PC-3 (cell line): ENCODE measurements at regions of chr13 and their contacts with region 1.

Region 1: DNA sequence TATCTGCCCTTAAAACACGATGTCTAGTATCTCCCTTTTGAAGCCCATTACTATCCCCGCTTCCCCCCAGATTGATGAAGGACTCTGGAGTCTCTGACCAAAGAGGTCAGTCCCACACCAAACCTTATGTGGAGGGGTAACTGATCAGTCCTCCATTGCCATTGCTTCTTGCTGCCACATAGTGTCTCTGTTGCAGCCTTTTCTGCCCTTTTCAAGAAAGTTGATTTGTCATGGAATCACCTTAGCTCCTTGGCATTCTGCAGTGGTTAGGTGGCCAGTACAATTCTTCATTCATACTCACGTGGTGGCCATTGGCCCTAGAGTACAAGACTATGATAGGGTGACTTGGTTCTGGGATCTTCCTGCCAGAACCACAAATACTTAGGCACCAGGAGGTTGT is 8.4 kb upstream of the HTR2A start:
- DNase-seq: peak; percentile 55
- ATAC-seq: peak; percentile 71
- H3K4me3 ChIP-seq: no peak overlapping the region
- H3K27ac ChIP-seq: no peak overlapping the region
- H3K4me1 ChIP-seq: peaks cover 13% of the 10 kb centered on the region
- H3K27me3 ChIP-seq: no peaks in the 10 kb centered on the region
- CTCF ChIP-seq: peak; percentile 59

Region 2: GRCh38 chr13:46759846-46760245 is 145.4 kb before region 1 on chr13:
- CTCF ChIA-PET with region 1: no interaction called
- POLR2A ChIA-PET with region 1: no interaction called
- intact Hi-C with region 1: loop called (anchors 1 kb)
- DNase-seq: peak; percentile 33
- ATAC-seq: peak; percentile 52
- H3K4me3 ChIP-seq: no peak overlapping the region
- H3K27ac ChIP-seq: peak overlapping the region; percentile 16; the same call in 1 of the 2 replicates
- H3K4me1 ChIP-seq: peaks cover 36% of the 10 kb centered on the region
- H3K27me3 ChIP-seq: no peaks in the 10 kb centered on the region
- CTCF ChIP-seq: no peak

Region 3: DNA sequence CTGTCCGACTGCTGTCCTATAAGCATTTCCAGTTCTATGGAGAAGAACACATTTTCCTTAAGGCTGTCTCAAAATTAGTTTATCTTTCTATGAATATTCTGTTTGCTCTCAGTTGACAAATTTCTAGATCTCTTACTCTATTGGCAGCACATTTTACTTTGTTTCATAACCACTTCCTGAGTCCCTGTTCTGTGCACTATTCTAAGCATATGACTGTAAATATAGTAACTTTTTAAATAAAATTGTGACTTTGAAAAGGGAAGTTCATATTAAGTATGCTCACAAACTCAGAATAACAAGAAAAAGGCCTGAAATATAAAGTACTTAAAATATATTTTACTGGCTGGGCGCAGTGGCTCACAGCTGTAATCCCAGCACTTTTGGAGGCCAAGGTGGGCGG is 48.1 kb after region 1 on chr13:
- CTCF ChIA-PET with region 1: no interaction called
- POLR2A ChIA-PET with region 1: no interaction called
- intact Hi-C with region 1: loop called (anchors 5 kb)
- DNase-seq: peak; percentile 25
- ATAC-seq: no peak
- H3K4me3 ChIP-seq: no peak overlapping the region
- H3K27ac ChIP-seq: peak overlapping the region; percentile 1; the same call in 1 of the 2 replicates
- H3K4me1 ChIP-seq: peaks cover 39% of the 10 kb centered on the region
- H3K27me3 ChIP-seq: no peaks in the 10 kb centered on the region
- CTCF ChIP-seq: no peak

Region 4: DNA sequence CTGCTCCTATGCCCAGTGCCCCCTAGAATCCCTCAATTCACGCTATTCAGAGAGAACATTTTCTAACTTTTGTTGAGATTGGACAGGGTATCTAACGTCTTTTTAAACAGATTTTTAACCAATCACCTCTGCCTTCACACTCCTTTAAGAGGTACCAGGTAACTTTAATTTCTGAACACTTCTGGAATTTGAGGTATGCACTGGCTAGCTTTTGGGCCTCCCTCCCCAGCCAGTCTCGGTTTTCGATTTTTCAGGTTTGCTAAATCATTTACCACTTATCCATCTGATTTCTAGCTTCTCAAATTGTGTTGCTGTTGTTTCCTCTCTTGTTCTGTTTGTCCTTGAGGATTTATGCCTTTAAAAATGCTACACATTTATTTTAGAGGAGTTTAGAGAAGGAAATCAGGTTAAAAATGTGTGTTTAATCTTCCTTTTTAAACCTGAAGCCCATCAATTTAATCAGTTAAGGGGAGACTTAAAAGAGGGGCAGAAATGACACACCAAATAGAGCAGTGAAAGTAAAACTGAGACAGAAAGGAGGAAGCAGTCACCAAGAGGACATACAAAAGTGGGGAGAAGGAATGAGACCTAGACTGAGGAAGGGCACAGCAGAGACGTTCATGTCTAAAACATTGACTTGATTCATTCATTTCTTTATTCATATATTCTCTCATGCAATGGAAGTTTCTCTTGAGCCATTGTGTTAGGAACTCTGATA is 131.2 kb after region 1 on chr13:
- CTCF ChIA-PET with region 1: no interaction called
- POLR2A ChIA-PET with region 1: no interaction called
- intact Hi-C with region 1: no loop called
- DNase-seq: no peak
- ATAC-seq: no peak
- H3K4me3 ChIP-seq: no peak overlapping the region
- H3K27ac ChIP-seq: no peak overlapping the region
- H3K4me1 ChIP-seq: peaks cover 34% of the 10 kb centered on the region
- H3K27me3 ChIP-seq: no peaks in the 10 kb centered on the region
- CTCF ChIP-seq: no peak

Region 5: DNA sequence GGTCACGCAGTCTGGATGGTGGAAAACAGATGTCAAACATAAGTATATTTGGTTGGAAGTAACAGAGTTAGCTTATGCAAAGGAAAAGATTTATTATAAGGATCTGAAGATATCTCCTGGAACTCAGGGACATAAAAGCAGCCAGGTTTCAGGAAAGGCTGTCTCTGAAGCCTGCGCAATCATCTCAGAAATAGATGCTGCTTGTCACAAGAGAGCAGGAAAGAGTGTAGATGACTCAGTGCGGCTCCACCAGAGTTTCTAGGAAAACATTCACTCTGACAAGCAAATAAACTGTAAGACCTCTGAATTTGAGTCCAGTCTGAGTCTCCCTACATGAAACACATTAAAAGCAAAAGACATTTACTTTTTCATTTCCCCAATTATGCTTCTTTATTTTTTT is 212.0 kb after region 1 on chr13:
- CTCF ChIA-PET with region 1: no interaction called
- POLR2A ChIA-PET with region 1: no interaction called
- intact Hi-C with region 1: loop called (anchors 10 kb)
- DNase-seq: peak; percentile 68
- ATAC-seq: peak; percentile 76
- H3K4me3 ChIP-seq: peak overlapping the region; percentile 4; the same call in 1 of the 2 replicates
- H3K27ac ChIP-seq: peak overlapping the region; percentile 62
- H3K4me1 ChIP-seq: peaks cover 54% of the 10 kb centered on the region
- H3K27me3 ChIP-seq: no peaks in the 10 kb centered on the region
- CTCF ChIP-seq: no peak